Mammary epithelial cell (primary cell): ENCODE measurements at regions of chr10 and their contacts with region 1.

Region 1: GRCh38 chr10:133044401-133044804 is 43.3 kb upstream of the ADGRA1 start:
- DNase-seq: no peak
- H3K4me3 ChIP-seq: no peak overlapping the region
- H3K27ac ChIP-seq: no peak overlapping the region
- H3K4me1 ChIP-seq: no peaks in the 10 kb centered on the region
- H3K27me3 ChIP-seq: no peaks in the 10 kb centered on the region
- CTCF ChIP-seq: no peak

Region 2: GRCh38 chr10:132939957-132940790 is 104.2 kb before region 1 on chr10:
- CTCF ChIA-PET with region 1: no interaction called
- dilution Hi-C with region 1: loop called (anchors 10 kb)
- in situ Hi-C with region 1: no loop called
- intact Hi-C with region 1: no loop called
- DNase-seq: no peak
- H3K4me3 ChIP-seq: no peak overlapping the region
- H3K27ac ChIP-seq: no peak overlapping the region
- H3K4me1 ChIP-seq: no peaks in the 10 kb centered on the region
- H3K27me3 ChIP-seq: no peaks in the 10 kb centered on the region
- CTCF ChIP-seq: no peak

Region 3: DNA sequence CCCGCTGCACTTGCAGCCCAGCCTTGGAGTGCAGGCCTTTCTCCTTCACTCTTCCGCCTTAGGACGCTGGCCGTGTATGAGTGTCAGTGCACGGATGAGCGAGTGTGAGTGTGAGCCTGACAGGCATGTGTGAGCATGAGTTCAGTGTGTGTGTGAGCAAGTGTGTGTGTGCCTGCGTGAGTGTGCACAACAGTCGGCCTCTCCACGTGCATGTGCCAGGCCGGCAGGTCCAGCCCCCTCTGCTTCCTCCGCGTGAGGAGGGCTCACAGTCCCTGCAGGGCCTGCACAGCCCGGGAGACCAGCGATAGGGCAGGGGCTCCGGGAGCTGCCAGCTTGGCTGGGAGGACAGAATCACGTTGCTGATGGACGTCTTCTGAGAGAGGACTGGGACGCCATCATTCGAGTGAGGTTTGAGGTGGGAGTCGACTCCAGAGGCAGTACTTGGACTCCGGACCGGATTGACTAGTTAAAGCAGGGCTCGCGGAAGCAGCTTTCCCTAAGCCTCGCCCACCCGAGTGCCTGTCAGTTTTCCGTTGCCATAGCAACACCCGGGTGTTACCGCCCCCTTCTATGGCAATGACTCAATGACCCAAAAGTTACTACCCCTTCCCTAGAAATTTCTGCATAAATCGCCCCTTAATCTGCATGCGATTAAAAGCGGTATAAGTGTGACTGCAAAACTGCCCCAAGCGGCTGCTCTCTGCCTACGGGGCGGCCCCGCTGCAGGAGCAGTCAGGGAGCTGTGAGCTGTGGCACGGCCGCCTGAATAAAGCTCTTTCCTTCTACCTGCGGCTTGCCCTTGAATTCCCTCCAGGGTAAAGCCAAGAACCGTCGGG is 82.4 kb before region 1 on chr10:
- CTCF ChIA-PET with region 1: no interaction called
- dilution Hi-C with region 1: loop called (anchors 5 kb)
- in situ Hi-C with region 1: no loop called
- intact Hi-C with region 1: no loop called
- DNase-seq: peak; percentile 56
- H3K4me3 ChIP-seq: peak overlapping the region; percentile 4 to 37 (median 4)
- H3K27ac ChIP-seq: no peak overlapping the region
- H3K4me1 ChIP-seq: no peaks in the 10 kb centered on the region
- H3K27me3 ChIP-seq: peaks cover 2% of the 10 kb centered on the region
- CTCF ChIP-seq: no peak

Region 4: GRCh38 chr10:132987671-132988571 is 56.5 kb before region 1 on chr10:
- CTCF ChIA-PET with region 1: no interaction called
- dilution Hi-C with region 1: loop called (anchors 5 kb)
- in situ Hi-C with region 1: no loop called
- intact Hi-C with region 1: no loop called
- DNase-seq: no peak
- H3K4me3 ChIP-seq: no peak overlapping the region
- H3K27ac ChIP-seq: no peak overlapping the region
- H3K4me1 ChIP-seq: no peaks in the 10 kb centered on the region
- H3K27me3 ChIP-seq: no peaks in the 10 kb centered on the region
- CTCF ChIP-seq: no peak

Region 5: DNA sequence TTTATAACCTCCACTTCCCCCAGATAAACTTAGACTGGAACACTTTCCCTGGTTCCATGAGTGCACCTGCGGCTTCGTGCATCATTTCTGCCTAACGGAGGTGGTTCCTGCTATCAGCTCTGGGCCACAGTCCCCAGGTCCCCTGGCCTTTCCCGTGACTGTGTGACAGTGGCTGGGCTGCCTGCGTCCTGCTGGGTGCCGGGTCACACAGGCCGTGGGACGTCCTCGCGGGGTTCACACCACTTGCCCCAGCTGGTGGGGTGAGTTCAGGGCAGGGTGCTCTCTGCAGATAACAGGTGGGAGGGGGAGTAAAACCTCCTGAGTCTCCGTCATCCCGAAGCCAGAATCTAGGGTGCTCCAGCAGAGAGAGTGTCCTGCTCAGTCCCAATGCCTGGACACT is 43.3 kb before region 1 on chr10:
- CTCF ChIA-PET with region 1: no interaction called
- dilution Hi-C with region 1: no loop called
- in situ Hi-C with region 1: no loop called
- intact Hi-C with region 1: no loop called
- DNase-seq: no peak
- H3K4me3 ChIP-seq: no peak overlapping the region
- H3K27ac ChIP-seq: no peak overlapping the region
- H3K4me1 ChIP-seq: no peaks in the 10 kb centered on the region
- H3K27me3 ChIP-seq: no peaks in the 10 kb centered on the region
- CTCF ChIP-seq: no peak

Region 6: DNA sequence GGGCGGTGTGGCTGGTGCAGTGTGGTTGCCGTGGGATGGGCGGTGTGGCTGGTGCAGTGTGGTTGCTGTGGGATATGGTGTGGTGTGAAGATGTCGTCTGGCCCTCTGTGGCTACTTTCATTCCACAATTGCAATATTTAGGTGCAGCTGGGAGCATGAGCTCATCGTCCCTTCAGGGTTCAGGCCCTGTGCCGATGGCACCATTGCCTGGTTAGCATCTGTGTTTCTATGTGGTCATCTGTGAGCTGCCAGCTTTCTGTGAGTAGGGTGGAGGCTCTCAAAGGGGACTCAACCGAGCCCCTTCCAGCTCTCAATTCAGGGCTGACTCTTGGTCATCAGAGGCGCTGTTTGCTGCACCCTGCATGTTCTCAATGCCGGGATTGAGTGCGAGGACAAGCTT is 46.9 kb after region 1 on chr10:
- CTCF ChIA-PET with region 1: no interaction called
- dilution Hi-C with region 1: loop called (anchors 5 kb)
- in situ Hi-C with region 1: no loop called
- intact Hi-C with region 1: no loop called
- DNase-seq: no peak
- H3K4me3 ChIP-seq: no peak overlapping the region
- H3K27ac ChIP-seq: no peak overlapping the region
- H3K4me1 ChIP-seq: no peaks in the 10 kb centered on the region
- H3K27me3 ChIP-seq: peaks cover 24% of the 10 kb centered on the region
- CTCF ChIP-seq: no peak

Region 7: GRCh38 chr10:133139551-133140065 is 95.2 kb after region 1 on chr10:
- CTCF ChIA-PET with region 1: no interaction called
- dilution Hi-C with region 1: loop called (anchors 5 kb)
- in situ Hi-C with region 1: no loop called
- intact Hi-C with region 1: no loop called
- DNase-seq: no peak
- H3K4me3 ChIP-seq: no peak overlapping the region
- H3K27ac ChIP-seq: no peak overlapping the region
- H3K4me1 ChIP-seq: no peaks in the 10 kb centered on the region
- H3K27me3 ChIP-seq: peaks cover 2% of the 10 kb centered on the region
- CTCF ChIP-seq: no peak